HEK293 (cell line): ENCODE measurements at regions of chr16 and their contacts with region 1.

Region 1: DNA sequence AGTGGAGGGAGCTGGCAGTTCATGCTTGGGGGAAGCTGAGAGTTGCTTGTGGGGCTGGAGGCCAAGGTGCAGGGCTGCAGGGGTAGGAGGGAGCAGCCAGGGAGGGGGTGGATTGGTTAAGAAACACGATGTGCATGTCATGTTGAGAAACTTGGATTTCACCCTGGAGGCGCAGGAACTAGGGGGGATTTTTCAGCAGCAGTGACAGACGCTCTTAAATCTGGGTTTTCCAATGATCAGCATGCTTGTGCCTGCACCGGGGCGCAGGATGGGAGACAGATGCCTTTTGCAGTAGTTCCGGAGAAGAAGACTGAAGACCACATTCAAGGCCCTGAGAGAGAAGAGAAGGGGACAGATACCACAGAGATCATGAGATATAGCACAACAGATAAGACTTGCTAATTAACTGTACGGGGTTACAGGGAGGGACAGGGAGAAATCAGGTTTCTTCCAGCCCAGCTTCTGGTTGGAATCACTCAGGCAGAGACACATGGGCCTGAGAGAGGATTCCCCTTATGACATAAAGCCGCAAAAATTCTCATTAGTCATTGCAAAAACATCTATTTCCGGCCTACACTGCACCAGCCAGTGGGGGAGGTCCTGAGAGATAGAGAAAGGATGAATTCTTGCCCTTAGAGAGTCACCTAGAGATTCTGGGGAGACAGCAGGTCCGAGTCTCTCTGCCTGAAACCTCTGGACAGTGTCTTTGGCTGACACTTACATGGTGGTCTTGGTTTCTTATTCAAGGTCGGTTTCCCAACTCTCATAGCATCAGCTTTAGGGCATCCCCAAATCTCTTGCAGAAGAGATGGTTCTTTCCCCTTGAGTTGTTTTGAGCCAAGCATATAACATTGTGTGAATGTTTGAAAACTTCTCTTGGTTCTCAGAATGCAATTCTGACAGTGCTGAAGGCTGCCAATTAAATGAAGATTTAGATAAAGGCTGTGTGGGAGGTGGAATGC is 27.1 kb downstream of the CDH13 start:
- H3K4me3 ChIP-seq: no peak overlapping the region
- H3K27ac ChIP-seq: no peak overlapping the region
- H3K4me1 ChIP-seq: peaks cover 10% of the 10 kb centered on the region
- CTCF ChIP-seq: no peak

Region 2: DNA sequence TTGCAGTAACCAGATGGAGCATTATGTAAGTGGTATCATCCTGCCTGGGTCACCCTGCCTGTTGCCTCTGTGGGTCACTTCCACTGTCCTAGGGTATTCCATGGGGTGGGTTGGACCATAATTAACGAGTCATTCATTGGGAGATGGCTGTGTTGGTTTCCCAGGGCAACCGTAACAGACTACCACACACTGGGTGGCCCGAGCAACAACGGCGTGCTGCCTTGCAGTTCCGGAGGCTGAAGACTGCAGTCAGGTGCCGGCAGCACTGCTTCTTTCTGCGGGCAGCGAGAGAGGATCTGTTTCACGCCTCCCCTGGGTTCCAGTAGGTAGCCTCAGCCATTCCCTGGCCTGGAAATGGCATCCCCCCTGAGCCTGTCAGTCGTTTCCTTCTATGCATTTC is 1238.1 kb before region 1 on chr16:
- CTCF ChIA-PET with region 1: no interaction called
- POLR2A ChIA-PET with region 1: interaction called, 10 read pairs
- H3K4me3 ChIP-seq: no peak overlapping the region
- H3K27ac ChIP-seq: no peak overlapping the region
- H3K4me1 ChIP-seq: no peaks in the 10 kb centered on the region
- CTCF ChIP-seq: no peak

Region 3: GRCh38 chr16:82639666-82640336 is 14.0 kb before region 1 on chr16:
- CTCF ChIA-PET with region 1: interaction called, 55 read pairs
- POLR2A ChIA-PET with region 1: no interaction called
- H3K4me3 ChIP-seq: no peak overlapping the region
- H3K27ac ChIP-seq: no peak overlapping the region
- H3K4me1 ChIP-seq: no peaks in the 10 kb centered on the region
- CTCF ChIP-seq: peak; percentile 39; the same call in 1 of the 2 replicates

Region 4: GRCh38 chr16:82671741-82672140 is 17.9 kb after region 1 on chr16:
- CTCF ChIA-PET with region 1: interaction called, 14 read pairs
- POLR2A ChIA-PET with region 1: no interaction called
- H3K4me3 ChIP-seq: no peak overlapping the region
- H3K27ac ChIP-seq: no peak overlapping the region
- H3K4me1 ChIP-seq: no peaks in the 10 kb centered on the region
- CTCF ChIP-seq: no peak